ENCODE measurements at regions of chr6 and their contacts with region 1.

Region 1: DNA sequence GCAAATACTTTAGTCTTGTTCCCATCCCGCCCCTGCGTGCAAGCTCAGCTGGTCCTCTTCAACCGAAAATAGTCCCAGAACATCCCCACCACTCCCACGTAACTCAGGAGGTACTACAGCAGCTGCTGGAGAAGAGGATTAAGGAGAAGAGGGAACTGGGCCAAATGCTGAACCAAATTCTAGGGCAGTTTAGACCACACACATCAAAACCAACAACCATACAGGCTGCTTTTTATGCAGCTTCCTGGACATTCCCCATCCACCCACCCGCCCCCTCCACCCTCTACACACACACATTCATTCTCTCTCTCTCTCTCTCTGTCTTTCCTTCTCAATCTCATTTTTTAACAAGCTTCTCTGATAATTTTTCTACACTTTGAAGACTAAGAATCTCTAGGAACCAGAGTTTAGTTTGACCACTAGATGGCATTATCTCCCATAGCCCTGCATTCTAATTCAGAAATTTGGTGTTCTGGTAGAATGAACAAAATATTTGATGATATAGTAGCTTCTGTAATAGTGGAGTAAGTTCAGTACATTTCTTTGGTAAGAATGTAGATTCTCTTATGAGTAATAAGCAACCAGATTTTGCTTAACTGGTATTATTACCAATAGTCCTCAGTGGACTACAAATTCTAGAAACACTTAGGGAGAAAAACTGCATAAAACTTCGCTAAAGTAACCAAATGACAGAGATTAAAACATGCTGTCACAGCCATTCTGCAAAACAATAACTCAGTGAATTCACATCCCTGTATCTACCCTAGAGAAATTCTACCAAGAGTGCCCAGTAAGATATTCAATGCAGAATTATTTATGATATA is 52.1 kb upstream of the BEND6 start:
- H3K4me3 ChIP-seq: no peak overlapping the region
- H3K27ac ChIP-seq: no peak overlapping the region
- H3K4me1 ChIP-seq: no peaks in the 10 kb centered on the region
- CTCF ChIP-seq: no peak; the same call in 1 of the 2 replicates

Region 2: DNA sequence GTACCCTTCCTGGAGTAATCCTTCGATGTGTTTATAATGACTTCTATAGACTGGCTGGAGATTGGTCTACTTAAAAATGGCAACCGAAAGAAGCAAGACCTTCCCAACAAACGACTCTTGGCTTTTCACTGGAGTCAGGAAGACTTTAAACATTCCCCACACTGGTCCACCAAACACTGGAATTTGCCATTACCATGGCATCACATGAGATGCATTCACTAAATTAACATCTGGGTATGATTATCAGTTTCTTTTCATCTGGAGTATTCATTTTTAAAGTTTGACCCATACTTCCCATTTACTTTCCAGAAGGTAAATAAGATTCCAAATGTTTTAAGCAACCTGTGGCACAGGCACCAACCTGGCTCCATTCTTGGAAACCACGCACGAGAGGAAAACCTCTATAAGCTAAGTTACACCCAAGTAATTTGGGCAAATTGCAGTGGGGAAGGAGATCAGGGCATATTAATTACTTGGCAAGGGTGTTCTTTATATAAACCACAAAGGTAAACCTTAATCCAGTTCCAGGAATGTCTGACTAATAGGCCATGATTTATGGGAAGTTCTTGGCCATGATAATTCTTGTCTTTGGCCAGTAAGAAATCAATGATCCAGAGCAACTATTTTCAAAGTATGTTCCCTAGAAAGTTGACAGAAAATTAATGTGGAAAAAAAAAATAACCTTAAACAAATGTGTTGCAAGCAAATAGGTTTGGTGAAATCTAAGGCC is 465.5 kb before region 1 on chr6:
- CTCF ChIA-PET with region 1: no interaction called
- POLR2A ChIA-PET with region 1: no interaction called
- H3K4me3 ChIP-seq: no peak overlapping the region
- H3K27ac ChIP-seq: no peak overlapping the region
- H3K4me1 ChIP-seq: no peaks in the 10 kb centered on the region
- CTCF ChIP-seq: no peak

Region 3: GRCh38 chr6:56708810-56709597 is 193.8 kb before region 1 on chr6:
- CTCF ChIA-PET with region 1: interaction called, 33 read pairs
- POLR2A ChIA-PET with region 1: no interaction called
- H3K4me3 ChIP-seq: no peak overlapping the region
- H3K27ac ChIP-seq: no peak overlapping the region
- H3K4me1 ChIP-seq: peaks cover 9% of the 10 kb centered on the region; the same call in 1 of the 2 replicates
- CTCF ChIP-seq: no peak

Region 4: DNA sequence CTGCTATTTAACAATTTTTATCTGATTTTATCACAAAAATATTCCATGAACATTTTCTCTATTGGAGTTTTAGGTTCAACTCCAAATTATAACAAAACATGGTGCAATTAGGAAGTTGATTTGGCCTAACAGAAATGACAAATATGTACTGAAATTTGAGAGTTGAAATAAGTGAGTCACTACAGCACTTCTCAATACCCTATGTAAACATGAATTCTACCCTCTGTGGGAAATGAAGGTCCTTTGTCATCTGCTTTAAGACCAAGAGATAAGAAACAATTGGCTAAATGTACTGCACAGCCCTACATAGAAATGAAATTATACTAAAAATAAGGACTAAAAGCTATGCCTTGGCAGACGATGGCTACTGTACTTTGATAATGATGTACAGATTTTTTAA is 34.2 kb before region 1 on chr6:
- CTCF ChIA-PET with region 1: interaction called, 15 read pairs
- POLR2A ChIA-PET with region 1: interaction called, 3 read pairs
- H3K4me3 ChIP-seq: no peak overlapping the region
- H3K27ac ChIP-seq: peak overlapping the region; percentile 34; the same call in 1 of the 2 replicates
- H3K4me1 ChIP-seq: peaks cover 39% of the 10 kb centered on the region
- CTCF ChIP-seq: no peak

Region 5: DNA sequence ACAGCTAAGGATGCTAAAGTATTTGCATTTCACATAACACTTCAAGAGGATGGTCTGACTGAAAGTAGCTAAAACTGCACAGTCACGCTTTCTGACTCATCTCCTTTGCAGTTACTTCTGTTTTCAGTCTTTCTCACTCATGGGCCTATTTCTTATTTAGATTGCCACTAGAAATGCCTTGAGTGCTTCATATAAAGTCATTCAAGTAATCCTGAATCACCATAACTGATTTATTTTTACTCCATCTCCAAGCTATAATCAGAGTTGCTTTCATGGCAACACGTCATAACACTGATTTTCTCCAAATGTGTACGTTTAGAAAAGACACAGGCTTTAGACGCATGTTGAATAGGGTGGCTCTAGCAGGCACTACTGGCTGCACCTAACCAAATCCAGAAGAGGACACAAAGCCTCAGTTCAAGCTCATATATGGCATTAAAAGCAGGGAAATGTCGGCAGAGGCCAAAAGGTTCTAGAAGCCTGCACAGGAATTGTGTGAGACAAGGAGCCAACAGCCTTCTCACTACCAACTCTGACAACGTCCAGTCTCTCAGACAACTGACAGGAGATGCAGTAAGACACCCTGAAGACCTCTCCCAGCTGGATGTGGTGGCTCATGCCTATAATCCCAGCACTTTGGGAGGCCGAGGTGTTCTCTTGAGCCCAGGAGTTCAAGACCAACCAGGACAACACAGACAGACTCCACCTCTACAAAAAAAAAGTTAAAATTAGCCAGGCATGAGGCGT is 12.0 kb before region 1 on chr6:
- CTCF ChIA-PET with region 1: interaction called, 56 read pairs
- POLR2A ChIA-PET with region 1: no interaction called
- H3K4me3 ChIP-seq: no peak overlapping the region
- H3K27ac ChIP-seq: no peak overlapping the region
- H3K4me1 ChIP-seq: no peaks in the 10 kb centered on the region
- CTCF ChIP-seq: no peak

Region 6: GRCh38 chr6:56927538-56928453 is 24.9 kb after region 1 on chr6:
- CTCF ChIA-PET with region 1: interaction called, 69 read pairs
- POLR2A ChIA-PET with region 1: no interaction called
- H3K4me3 ChIP-seq: no peak overlapping the region
- H3K27ac ChIP-seq: no peak overlapping the region
- H3K4me1 ChIP-seq: 0 out of 2 replicates have a peak, but pooled peaks cover 3% of the 10 kb centered on the region
- CTCF ChIP-seq: no peak

Region 7: DNA sequence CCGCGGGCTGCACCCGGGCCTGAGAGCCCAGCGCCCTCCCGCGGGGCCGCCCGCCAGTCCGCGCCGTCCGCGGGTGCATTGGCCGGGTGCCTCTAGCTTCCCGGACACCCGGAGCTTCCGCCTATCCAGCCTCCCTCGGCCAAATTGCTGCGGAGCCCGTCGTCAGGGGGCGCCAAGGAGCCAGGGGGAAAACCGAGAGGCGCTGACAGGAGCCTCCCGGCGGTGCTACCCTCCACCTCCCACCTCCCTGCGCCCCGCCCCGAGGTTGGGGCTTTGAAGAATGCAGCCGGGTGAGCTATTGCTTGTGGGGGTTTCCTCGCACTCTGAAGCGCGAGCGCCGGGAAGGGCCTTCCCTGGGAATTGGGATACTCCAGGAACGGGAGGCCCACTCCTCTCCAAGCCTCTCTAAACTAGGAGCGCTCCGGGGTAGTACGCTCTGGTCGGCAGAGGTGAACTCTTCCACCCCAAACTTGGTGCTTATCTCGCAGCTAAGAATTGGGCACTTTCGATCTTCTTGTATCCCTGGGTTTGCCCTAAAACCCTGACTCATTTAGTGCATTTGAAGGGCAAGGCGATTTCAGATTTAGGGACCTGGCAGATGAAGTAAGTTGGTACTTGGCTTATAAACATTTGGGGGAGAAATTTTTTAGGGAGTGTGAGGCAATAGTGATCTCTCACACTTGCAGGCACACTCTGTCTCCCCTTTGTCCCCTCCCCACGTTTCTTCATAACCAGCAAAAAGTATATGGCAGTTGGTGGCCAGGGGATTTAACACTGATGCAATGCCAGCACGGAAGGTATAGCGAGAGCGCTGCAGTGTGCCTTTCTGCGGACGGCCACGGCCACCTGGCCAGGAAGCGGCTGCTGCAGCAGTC is 52.6 kb after region 1 on chr6:
- CTCF ChIA-PET with region 1: interaction called, 92 read pairs
- POLR2A ChIA-PET with region 1: interaction called, 15 read pairs
- H3K4me3 ChIP-seq: peak overlapping the region; percentile 62
- H3K27ac ChIP-seq: peak overlapping the region; percentile 70; the same call in 1 of the 2 replicates
- H3K4me1 ChIP-seq: peaks cover 6% of the 10 kb centered on the region
- CTCF ChIP-seq: peak; percentile 94

Region 8: DNA sequence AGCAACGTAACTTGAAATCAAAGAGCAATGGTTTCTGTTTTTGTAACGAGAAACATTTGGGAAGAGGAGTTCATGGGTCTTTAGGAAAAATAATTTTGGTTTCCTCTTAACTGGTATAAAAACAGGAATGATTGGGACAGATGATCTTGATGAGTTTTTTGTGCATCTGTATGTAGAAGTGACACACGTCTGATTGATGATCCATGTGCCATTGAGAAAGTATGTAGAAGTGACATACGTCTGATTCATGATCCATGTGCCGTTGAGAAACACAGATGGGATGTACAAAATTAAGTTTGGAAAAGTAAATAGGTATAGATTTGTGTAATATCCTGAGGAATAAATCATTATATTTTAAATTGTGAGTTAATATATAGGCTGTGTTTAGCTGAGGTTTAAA is 145.7 kb after region 1 on chr6:
- CTCF ChIA-PET with region 1: interaction called, 38 read pairs
- POLR2A ChIA-PET with region 1: no interaction called
- H3K4me3 ChIP-seq: peak overlapping the region; percentile 37
- H3K27ac ChIP-seq: no peak overlapping the region
- H3K4me1 ChIP-seq: peaks cover 11% of the 10 kb centered on the region; the same call in 1 of the 2 replicates
- CTCF ChIP-seq: no peak